Activated CD4-positive, alpha-beta T cell treated with anti-CD3 and anti-CD28 coated beads for 36 hours (primary cell): ENCODE measurements at regions of chr13 and their contacts with region 1.

Region 1: DNA sequence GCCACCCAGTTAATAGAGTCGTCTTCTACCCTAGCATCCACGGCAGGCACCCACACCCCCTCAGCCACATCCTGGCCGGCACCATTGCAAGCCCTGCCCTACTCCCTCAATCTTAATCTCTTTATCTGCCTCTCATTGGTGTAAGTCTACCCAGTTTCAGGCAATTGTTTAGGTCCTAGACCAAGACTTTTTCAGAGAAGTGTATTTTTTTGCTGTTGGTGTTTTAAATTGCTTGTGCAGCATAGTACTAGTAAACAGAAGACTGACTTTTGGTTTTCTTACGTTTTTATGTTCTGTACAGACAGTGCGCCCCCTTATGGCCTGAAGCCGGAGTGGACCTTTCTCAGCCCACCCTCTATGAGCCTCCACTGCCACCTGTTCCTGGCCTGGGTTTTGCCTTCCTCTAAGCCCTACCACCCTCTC is 2.3 kb upstream of the LCP1 start:
- DNase-seq: peak; percentile 89
- ATAC-seq: peak; percentile 61
- H3K4me3 Mint-ChIP-seq: peak overlapping the region; percentile 97
- H3K27ac Mint-ChIP-seq: peak overlapping the region; percentile 98
- H3K4me1 Mint-ChIP-seq: peaks cover 35% of the 10 kb centered on the region
- H3K27me3 Mint-ChIP-seq: no peaks in the 10 kb centered on the region

Region 2: DNA sequence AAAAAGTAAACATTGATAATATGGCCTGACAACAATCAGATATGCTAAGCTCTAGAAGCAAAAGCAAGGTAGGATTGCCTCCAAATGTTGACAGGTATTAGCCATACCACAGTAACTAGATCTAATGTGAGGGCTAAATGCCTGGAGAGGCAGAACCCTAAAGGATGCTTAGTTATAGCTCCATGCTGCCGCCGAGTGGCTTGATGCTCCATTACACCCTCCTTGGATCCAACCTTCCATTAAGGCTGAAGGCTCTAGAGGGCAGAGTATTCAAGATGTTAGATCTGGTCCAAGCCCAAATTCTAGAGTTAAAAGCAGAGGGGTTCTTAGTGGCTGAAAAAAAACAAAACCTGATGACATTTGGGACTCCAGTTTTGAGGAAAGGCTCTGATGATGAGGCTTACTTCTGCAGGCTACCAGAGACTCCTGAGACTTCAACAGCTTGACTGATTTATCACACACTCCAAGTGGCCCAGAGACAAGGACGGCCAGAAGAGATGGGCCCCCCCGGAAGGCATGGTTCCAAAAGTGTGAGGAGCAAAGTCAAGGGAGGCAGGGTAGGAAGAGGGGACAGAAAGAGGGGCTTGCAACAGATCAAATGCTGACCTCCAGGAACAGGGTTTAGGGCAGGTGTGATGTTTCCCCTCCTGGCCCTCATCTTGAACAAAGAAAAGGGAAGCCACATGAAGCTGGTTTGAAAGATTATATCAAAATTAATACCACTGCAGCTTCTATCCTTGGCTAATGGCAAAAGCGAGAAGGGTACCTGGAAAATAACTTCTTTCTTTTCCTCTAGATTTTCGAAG is 57.5 kb before region 1 on chr13:
- CTCF ChIA-PET with region 1: interaction called, 3 read pairs
- POLR2A ChIA-PET with region 1: no interaction called
- intact Hi-C with region 1: loop called in 1 of 2 experiments (anchors 2 kb)
- DNase-seq: peak; percentile 86
- ATAC-seq: peak; percentile 86
- H3K4me3 Mint-ChIP-seq: no peak overlapping the region
- H3K27ac Mint-ChIP-seq: peak overlapping the region; percentile 76
- H3K4me1 Mint-ChIP-seq: peaks cover 39% of the 10 kb centered on the region
- H3K27me3 Mint-ChIP-seq: no peaks in the 10 kb centered on the region

Region 3: DNA sequence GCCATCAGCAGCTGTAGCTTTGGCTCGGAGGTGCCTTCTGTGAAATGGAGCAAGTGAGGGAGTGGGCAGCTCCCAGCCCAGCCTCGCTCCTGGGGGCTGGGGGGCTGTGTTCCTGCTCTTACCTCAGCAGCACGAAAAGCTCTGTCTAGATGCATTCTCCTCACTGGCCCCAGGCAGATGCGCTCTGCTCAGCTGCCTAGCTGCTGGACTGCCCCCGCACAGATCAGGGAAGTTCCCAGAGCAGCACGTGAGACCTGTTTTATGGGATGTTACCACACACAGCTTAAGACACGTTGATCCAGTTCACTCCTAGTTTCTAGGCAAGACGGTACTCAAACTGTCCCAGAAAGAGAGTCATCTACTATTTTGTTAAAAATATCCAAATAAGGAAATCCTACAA is 15.9 kb before region 1 on chr13:
- CTCF ChIA-PET with region 1: interaction called, 17 read pairs
- POLR2A ChIA-PET with region 1: interaction called, 25 read pairs
- intact Hi-C with region 1: loop called (anchors 1 kb)
- DNase-seq: peak; percentile 82
- ATAC-seq: peak; percentile 59
- H3K4me3 Mint-ChIP-seq: peak overlapping the region; percentile 67
- H3K27ac Mint-ChIP-seq: peak overlapping the region; percentile 85
- H3K4me1 Mint-ChIP-seq: peaks cover 95% of the 10 kb centered on the region
- H3K27me3 Mint-ChIP-seq: no peaks in the 10 kb centered on the region

Region 4: GRCh38 chr13:46295491-46296114 is 111.3 kb after region 1 on chr13:
- CTCF ChIA-PET with region 1: no interaction called
- POLR2A ChIA-PET with region 1: interaction called, 3 read pairs
- intact Hi-C with region 1: loop called (anchors 5 kb)
- DNase-seq: peak; percentile 75
- ATAC-seq: peak; percentile 88
- H3K4me3 Mint-ChIP-seq: peak overlapping the region; percentile 44
- H3K27ac Mint-ChIP-seq: peak overlapping the region; percentile 95
- H3K4me1 Mint-ChIP-seq: peaks cover 60% of the 10 kb centered on the region
- H3K27me3 Mint-ChIP-seq: no peaks in the 10 kb centered on the region

Region 5: GRCh38 chr13:46387064-46387851 is 203.0 kb after region 1 on chr13 and contains the start of gene RUBCNL:
- CTCF ChIA-PET with region 1: no interaction called
- POLR2A ChIA-PET with region 1: no interaction called
- intact Hi-C with region 1: loop called in 1 of 2 experiments (anchors 5 kb)
- DNase-seq: peak; percentile 67
- ATAC-seq: peak; percentile 83
- H3K4me3 Mint-ChIP-seq: peak within 1 kb of the TSS; percentile 74
- H3K27ac Mint-ChIP-seq: peak within 1 kb of the TSS; percentile 34
- H3K4me1 Mint-ChIP-seq: peaks cover 22% of the 10 kb centered on the region
- H3K27me3 Mint-ChIP-seq: peaks cover 35% of the 10 kb centered on the region
- total RNA-seq, gene RUBCNL: 1.0 to 1.1 TPM